ENCODE measurements at regions of chr10 and their contacts with region 1.

Region 1: DNA sequence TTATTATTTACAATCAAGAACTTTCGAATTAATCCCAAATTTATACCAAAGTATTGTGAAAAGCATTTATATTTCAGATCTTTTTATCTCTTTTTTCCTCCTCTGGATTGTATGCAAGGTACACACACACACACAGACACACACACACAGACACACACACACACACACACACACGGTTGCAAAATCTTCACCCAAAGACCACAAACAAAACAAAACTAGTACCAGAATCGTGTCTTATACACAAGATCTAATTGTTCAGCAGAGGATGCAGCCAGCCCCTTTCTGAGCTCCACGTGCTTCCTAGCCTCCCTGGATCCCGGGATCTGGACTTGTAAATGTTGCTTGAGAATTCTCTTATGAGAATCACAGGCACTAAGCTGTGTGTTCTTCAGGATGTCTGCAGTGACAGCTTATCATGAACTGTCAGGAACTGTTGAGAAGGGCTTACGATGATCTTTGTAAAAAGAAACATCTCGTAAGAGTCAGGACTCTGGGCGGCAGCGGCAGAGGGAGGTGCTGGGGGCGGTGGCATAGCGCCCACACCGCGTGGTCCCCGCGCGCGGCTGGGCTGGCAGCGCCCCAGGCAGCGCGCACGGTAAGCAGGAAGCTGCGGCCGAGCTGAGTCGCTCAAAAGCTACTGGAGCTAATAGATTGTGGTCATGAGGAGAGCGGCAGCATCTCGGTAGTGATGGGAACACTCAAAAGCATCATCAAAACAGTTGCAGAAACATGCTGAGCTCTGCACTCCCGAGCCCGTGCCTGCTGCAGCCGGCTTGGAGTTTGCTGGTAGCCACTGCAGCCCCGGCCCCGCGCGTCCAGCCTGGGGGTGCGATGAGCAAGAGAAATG is 277.6 kb downstream of the GATA3 start:
- DNase-seq: peak; percentile 95
- H3K4me3 Mint-ChIP-seq: peak overlapping the region; percentile 85
- H3K27ac Mint-ChIP-seq: peak overlapping the region; percentile 95
- H3K4me1 Mint-ChIP-seq: peaks cover 81% of the 10 kb centered on the region
- H3K27me3 Mint-ChIP-seq: no peaks in the 10 kb centered on the region

Region 2: GRCh38 chr10:8065651-8066050 is 266.5 kb before region 1 on chr10:
- CTCF ChIA-PET with region 1: interaction called, 4 read pairs
- POLR2A ChIA-PET with region 1: interaction called, 84 read pairs
- DNase-seq: no peak
- H3K4me3 Mint-ChIP-seq: peak overlapping the region; percentile 68
- H3K27ac Mint-ChIP-seq: peak overlapping the region; percentile 84
- H3K4me1 Mint-ChIP-seq: peaks cover 96% of the 10 kb centered on the region
- H3K27me3 Mint-ChIP-seq: no peaks in the 10 kb centered on the region

Region 3: GRCh38 chr10:8138471-8138870 is 193.6 kb before region 1 on chr10:
- CTCF ChIA-PET with region 1: interaction called, 3 read pairs
- POLR2A ChIA-PET with region 1: interaction called, 47 read pairs
- DNase-seq: no peak
- H3K4me3 Mint-ChIP-seq: peak overlapping the region; percentile 82
- H3K27ac Mint-ChIP-seq: peak overlapping the region; percentile 97
- H3K4me1 Mint-ChIP-seq: peaks cover 56% of the 10 kb centered on the region
- H3K27me3 Mint-ChIP-seq: no peaks in the 10 kb centered on the region

Region 4: GRCh38 chr10:8193546-8193945 is 138.6 kb before region 1 on chr10:
- CTCF ChIA-PET with region 1: no interaction called
- POLR2A ChIA-PET with region 1: no interaction called
- DNase-seq: no peak
- H3K4me3 Mint-ChIP-seq: no peak overlapping the region
- H3K27ac Mint-ChIP-seq: no peak overlapping the region
- H3K4me1 Mint-ChIP-seq: peaks cover 9% of the 10 kb centered on the region
- H3K27me3 Mint-ChIP-seq: peaks cover 6% of the 10 kb centered on the region

Region 5: GRCh38 chr10:8245131-8245813 is 86.8 kb before region 1 on chr10:
- CTCF ChIA-PET with region 1: interaction called, 3 read pairs
- POLR2A ChIA-PET with region 1: interaction called, 21 read pairs
- DNase-seq: no peak
- H3K4me3 Mint-ChIP-seq: peak overlapping the region; percentile 64
- H3K27ac Mint-ChIP-seq: peak overlapping the region; percentile 94
- H3K4me1 Mint-ChIP-seq: peaks cover 76% of the 10 kb centered on the region
- H3K27me3 Mint-ChIP-seq: no peaks in the 10 kb centered on the region

Region 6: DNA sequence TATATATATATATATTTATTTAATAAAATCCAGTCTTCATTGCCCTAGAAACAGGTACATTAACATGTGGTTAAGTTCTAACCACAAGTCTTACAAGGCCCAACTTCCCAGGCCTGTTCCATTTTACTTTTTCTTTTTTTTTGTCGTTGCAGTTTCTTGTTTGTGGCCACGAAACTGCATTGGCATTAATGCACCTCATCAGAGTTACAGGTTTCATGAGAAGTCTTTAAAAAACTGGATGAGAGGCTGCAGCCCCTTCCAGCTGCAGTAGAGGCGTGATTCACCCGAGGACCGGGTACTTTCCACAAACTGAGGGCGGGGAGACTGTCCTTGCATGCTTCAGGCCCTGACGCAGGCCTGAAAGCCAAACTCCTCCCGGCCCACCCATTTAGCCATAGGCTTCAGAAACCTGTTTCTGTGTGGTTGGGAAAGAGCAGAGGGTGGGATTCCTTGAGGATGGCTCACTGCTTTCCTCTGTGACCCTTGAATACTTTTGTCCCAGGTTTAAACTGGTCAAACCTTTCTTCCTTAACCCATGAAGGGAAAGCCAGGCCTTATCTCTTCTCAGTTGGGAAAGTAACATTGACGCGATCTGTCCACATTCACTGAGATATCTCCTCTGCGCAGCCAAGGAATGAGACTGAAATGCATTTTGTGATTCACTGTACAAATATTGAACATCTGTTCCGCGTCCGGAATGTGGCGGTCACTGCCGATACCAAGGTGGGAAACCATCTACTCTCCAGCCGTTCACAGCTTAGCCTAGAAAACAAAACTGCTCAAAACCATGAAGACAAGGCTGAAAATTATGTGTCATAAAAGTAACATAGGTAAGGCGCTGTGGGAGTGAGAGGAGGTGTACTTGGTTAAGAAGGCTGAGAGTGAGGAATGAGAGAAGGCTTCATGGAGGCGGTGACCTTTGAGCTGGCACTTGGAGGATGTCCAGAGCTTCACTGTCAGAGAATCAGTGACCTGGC is 34.1 kb after region 1 on chr10:
- CTCF ChIA-PET with region 1: interaction called, 7 read pairs
- POLR2A ChIA-PET with region 1: interaction called, 69 read pairs
- DNase-seq: peak; percentile 67
- H3K4me3 Mint-ChIP-seq: peak overlapping the region; percentile 42
- H3K27ac Mint-ChIP-seq: peak overlapping the region; percentile 83
- H3K4me1 Mint-ChIP-seq: peaks cover 76% of the 10 kb centered on the region
- H3K27me3 Mint-ChIP-seq: no peaks in the 10 kb centered on the region

Region 7: DNA sequence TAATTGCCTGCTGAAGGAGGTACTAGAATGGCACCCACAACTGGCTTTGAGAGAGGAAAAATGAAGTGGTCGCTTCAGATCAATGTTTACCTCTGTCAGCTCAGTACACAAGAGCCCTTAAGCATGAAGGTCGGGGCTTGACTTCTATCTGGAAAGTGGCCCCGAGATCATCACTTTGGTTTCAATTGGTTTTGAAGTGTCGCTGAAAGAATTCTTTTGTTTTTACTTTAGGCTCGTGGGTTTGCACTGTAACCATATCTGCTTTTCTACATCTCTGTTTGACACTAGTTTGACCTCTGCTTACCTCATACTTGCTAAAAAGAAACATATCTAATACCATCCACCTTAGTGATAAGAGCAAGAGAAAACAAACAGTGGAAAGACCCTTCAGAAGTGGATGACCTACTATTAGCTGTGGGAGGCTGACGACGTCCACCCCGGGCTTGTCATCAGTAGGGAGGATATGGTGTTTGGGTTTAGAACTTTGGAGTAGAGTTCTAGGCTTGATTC is 84.1 kb after region 1 on chr10:
- CTCF ChIA-PET with region 1: no interaction called
- POLR2A ChIA-PET with region 1: interaction called, 19 read pairs
- DNase-seq: peak; percentile 41
- H3K4me3 Mint-ChIP-seq: peak overlapping the region; percentile 13
- H3K27ac Mint-ChIP-seq: peak overlapping the region; percentile 73
- H3K4me1 Mint-ChIP-seq: peaks cover 44% of the 10 kb centered on the region
- H3K27me3 Mint-ChIP-seq: no peaks in the 10 kb centered on the region